ENCODE measurements at regions of chr4 and their contacts with region 1.

Region 1: DNA sequence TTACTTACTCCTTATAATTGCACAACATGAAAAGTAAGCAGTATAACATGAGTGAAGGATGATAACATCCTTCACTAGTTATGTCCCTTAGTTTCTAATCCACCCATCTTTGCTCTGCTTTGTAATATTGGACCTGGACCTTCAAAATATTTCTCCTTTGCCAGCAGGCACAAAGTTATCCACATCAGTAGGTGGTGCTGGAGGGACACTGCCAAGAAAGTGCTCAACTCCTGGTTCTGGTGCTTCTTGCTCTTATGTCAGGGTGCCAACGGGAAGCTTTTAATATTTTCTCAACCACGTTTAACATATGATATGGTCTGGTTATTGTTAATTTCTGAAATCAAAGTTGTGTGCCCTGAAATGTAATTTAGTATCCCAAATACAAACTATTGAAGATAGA is 49.1 kb downstream of the TMEM165 start:
- DNase-seq: no peak
- H3K4me3 ChIP-seq: no peak overlapping the region
- CTCF ChIP-seq: peak; percentile 49

Region 2: DNA sequence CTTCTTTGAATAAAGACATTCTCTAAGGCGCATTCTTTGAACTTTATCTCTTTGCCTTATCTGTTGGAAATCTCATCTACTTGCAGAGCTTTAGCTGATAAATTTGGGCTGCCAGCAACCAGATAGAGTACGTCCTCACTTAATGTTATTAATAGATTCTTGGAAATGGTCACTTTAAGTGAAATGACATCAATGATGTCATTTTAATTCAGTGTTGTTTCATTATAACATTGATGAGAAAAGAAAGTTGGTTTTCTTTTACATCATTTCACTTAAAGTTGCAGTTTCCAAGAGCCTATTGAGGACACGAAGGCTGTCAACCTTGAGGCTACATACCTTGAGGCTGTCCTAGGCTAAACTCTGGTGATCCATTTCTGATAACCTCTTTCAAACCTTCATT is 39.8 kb before region 1 on chr4:
- CTCF ChIA-PET with region 1: no interaction called
- POLR2A ChIA-PET with region 1: no interaction called
- DNase-seq: no peak
- H3K4me3 ChIP-seq: no peak overlapping the region
- CTCF ChIP-seq: no peak

Region 3: GRCh38 chr4:55546756-55547465 is 102.1 kb after region 1 on chr4 and contains the start of gene CLOCK:
- CTCF ChIA-PET with region 1: interaction called, 28 read pairs
- POLR2A ChIA-PET with region 1: interaction called, 17 read pairs
- DNase-seq: no peak
- H3K4me3 ChIP-seq: peak within 1 kb of the TSS; percentile 77
- CTCF ChIP-seq: peak; percentile 62

Region 4: DNA sequence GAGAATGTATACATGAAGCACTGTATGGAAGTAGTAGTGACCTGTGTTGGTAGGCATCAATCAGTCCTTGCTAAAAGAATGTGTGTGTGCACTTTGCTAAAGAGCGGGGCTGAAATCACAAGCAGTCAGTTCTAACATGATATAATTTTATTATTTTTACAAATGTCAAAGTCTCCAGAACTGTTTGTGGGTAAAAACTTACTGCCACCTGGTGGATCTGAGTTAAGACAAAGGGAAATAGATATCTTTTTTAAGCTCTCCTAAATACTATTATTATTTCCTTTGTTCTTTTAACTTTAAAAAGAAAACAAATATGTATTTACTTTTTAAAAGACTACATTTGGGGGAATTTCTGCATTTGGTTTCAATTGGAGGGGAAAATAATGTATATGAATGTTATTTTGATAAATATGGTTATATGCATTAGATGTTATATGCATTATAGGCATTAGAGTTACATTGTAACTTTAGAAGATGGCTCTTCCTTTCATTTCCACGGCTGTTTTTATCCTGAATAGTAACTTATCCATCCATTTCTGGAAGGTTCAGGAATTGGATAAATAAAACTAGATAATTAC is 109.7 kb after region 1 on chr4:
- CTCF ChIA-PET with region 1: interaction called, 28 read pairs
- POLR2A ChIA-PET with region 1: interaction called, 5 read pairs
- DNase-seq: no peak
- H3K4me3 ChIP-seq: no peak overlapping the region
- CTCF ChIP-seq: peak; percentile 27

Region 5: GRCh38 chr4:55866973-55867574 is 422.2 kb after region 1 on chr4:
- CTCF ChIA-PET with region 1: interaction called, 17 read pairs
- POLR2A ChIA-PET with region 1: no interaction called
- DNase-seq: peak; percentile 16
- H3K4me3 ChIP-seq: no peak overlapping the region
- CTCF ChIP-seq: peak; percentile 68

Measured in AG04449 (cell line).